BJ (cell line): ENCODE measurements at regions of chr1 and their contacts with region 1.

Region 1: GRCh38 chr1:180468311-180468710 is 34.1 kb downstream of the ACBD6 start:
- DNase-seq: no peak
- H3K4me3 ChIP-seq: no peak overlapping the region
- H3K27me3 ChIP-seq: no peaks in the 10 kb centered on the region
- CTCF ChIP-seq: no peak

Region 2: DNA sequence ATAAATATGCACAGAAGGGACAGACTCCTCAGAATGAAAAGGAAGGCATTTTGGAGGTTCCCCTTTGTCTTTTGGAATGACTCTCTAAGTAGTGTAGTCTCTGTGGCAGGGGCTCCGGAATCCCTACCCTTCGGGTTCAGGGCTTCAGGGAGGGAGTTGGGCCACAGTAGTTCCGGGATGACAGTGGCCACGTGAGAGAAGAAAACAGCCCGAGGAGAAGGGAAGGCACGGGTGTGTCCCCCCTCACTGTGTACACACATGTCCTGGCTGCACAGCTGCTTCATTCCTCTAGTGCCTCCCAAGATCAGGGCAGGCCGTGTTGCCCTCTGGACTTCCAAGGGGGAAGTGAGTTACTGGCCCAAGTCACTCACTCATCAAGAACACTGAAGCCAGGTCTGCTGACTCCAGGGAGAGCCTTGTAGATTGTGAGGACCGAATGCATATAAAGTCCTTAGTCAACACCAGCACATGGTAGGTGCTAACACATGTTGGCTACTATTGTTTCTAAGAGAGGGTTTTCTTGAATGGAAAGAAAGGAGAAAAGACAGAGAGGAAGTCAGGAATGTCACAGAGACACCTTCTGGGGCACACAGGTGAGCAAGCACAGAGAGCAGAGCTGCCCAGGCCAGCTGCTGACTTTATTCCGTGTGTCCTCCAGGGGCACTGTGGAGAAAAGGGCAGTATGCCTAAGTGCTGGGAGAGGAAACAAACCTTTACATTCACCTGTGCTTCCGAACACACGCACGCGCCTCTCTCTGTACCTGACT is 198.4 kb before region 1 on chr1:
- CTCF ChIA-PET with region 1: no interaction called
- POLR2A ChIA-PET with region 1: no interaction called
- DNase-seq: no peak
- H3K4me3 ChIP-seq: no peak overlapping the region
- H3K27me3 ChIP-seq: no peaks in the 10 kb centered on the region
- CTCF ChIP-seq: 0 out of 2 replicates have a peak, but pooled peaks have one; percentile 17

Region 3: GRCh38 chr1:180451504-180451903 is 16.8 kb before region 1 on chr1:
- CTCF ChIA-PET with region 1: no interaction called
- POLR2A ChIA-PET with region 1: no interaction called
- DNase-seq: no peak
- H3K4me3 ChIP-seq: no peak overlapping the region
- H3K27me3 ChIP-seq: no peaks in the 10 kb centered on the region
- CTCF ChIP-seq: no peak

Region 4: DNA sequence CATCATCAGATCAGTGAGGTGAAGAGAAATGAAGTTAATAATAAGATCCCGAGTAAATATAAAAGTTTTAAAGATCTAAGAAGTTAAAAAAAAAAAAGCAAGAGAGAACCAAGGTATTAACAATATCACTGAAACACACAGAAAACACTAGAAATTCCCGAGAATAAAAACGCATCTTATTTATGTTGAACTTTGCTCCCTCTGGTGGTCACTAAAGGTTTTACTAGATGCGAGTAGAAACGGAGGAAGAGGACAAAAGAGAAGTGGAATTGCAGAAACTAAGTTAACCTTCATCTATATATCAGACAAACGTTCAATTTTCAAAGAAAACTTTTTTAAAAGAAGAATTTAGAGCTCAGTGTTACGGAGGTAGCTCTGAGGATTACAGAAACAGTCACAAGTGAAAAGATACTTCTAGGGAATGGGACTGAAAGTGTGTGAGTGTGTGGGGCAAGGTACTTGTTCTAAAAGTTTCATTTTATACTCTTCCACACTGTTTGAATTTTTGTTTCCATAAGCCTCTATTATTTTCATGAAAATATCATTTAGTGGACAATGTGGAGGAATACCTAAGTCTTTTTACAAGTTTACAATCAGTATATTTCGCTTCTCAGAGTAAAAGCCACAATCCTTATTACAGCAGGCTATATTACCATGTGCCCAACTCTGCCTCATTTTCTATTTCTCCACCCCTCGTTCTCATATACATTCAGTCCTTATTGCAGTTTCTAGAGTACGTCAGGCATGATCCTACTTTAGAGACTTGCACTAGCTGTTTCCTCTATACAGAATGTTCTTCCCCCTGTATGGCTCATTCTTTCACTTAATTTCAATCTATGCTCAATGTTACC is 14.3 kb after region 1 on chr1:
- CTCF ChIA-PET with region 1: interaction called, 12 read pairs
- POLR2A ChIA-PET with region 1: no interaction called
- DNase-seq: no peak
- H3K4me3 ChIP-seq: no peak overlapping the region
- H3K27me3 ChIP-seq: no peaks in the 10 kb centered on the region
- CTCF ChIP-seq: peak; percentile 72

Region 5: DNA sequence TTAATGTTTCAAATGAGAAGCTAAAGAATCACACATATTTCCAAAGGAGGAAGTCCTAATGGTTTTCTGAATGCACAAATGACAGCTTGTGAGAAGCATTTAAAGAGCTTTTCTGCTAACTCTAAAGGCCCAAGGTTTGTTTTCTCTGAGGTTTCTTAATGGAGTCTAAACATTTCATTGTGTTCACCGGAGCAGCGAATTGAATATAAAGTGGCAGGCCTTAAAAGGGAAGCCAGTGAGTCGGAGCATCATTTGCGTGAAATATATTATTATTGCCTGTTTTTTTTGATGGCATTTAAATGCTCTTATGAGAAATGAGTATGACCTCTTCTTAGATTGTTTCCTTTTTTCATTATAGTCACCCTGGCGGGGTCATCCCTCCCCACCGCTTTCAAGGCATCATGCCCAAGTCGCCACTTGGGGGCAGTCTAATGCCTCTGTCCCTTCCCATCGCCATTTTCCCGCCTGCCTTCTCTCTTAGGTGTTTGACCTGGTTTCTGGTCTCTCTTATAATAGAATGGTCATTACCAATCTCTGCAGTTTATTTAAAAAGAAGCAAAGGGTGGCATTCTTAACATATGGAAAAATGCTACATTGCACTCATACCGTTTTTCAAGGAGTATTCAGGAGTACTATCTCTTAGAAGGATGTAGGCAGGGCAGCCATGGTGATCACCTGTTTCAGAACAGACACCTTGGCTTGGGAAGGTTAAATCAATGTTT is 65.1 kb after region 1 on chr1:
- CTCF ChIA-PET with region 1: no interaction called
- POLR2A ChIA-PET with region 1: no interaction called
- DNase-seq: no peak
- H3K4me3 ChIP-seq: no peak overlapping the region
- H3K27me3 ChIP-seq: no peaks in the 10 kb centered on the region
- CTCF ChIP-seq: peak; percentile 79

Region 6: GRCh38 chr1:180563026-180563827 is 94.9 kb after region 1 on chr1:
- CTCF ChIA-PET with region 1: no interaction called
- POLR2A ChIA-PET with region 1: no interaction called
- DNase-seq: no peak
- H3K4me3 ChIP-seq: no peak overlapping the region
- H3K27me3 ChIP-seq: no peaks in the 10 kb centered on the region
- CTCF ChIP-seq: no peak